HCT116 (cell line): ENCODE measurements at regions of chr5 and their contacts with region 1.

Region 1: DNA sequence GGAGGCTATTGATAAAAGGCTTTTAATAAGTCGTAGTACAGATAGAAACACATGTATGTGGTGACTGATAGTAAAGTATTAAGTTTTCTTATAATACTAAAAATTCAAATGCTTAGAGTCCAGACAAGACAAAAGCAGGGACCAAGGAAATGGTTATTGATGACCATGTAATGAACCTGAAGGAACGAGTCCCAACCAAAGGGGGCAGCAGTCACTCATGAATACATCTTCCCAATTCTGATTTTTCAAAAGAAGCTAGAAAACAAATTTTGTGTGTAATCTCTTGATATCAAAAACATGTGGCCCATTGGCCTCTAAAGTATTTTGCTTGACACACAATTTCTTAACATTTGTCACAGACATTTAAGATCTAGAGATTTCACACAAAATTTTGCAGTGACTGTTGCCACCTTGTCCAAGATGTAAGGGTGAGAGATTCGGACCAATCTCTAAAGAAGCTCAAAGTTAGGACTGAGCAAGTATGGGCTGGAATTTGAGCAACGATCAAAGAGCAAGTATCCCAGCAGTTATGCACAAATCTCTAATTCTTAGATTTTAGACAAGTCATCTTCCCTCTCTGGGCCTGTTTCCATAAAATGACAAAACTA is 66.8 kb downstream of the ARL15 start:
- DNase-seq: peak; percentile 27
- ATAC-seq: peak; percentile 72
- H3K4me3 ChIP-seq: no peak overlapping the region
- H3K27ac ChIP-seq: no peak overlapping the region
- H3K4me1 ChIP-seq: no peaks in the 10 kb centered on the region
- H3K27me3 ChIP-seq: no peaks in the 10 kb centered on the region
- CTCF ChIP-seq: peak; percentile 59 to 77 (median 60)
- POLR2A ChIP-seq: no peak
- RAD21 ChIP-seq: peak; percentile 77

Region 2: GRCh38 chr5:54492178-54492577 is 248.6 kb after region 1 on chr5:
- CTCF ChIA-PET with region 1: interaction called, 48 read pairs
- POLR2A ChIA-PET with region 1: no interaction called
- RAD21 ChIA-PET with region 1: interaction called in 1 of 2 experiments, 6 read pairs
- intact Hi-C with region 1: loop called (anchors 1 kb)
- DNase-seq: no peak
- ATAC-seq: no peak
- H3K4me3 ChIP-seq: no peak overlapping the region
- H3K27ac ChIP-seq: no peak overlapping the region
- H3K4me1 ChIP-seq: no peaks in the 10 kb centered on the region
- H3K27me3 ChIP-seq: no peaks in the 10 kb centered on the region
- CTCF ChIP-seq: no peak
- POLR2A ChIP-seq: no peak
- RAD21 ChIP-seq: no peak

Region 3: GRCh38 chr5:54844905-54845566 is 601.5 kb after region 1 on chr5:
- CTCF ChIA-PET with region 1: interaction called, 9 read pairs
- POLR2A ChIA-PET with region 1: no interaction called
- RAD21 ChIA-PET with region 1: no interaction called
- intact Hi-C with region 1: loop called (anchors 5 kb)
- DNase-seq: peak; percentile 31
- ATAC-seq: no peak
- H3K4me3 ChIP-seq: no peak overlapping the region
- H3K27ac ChIP-seq: no peak overlapping the region
- H3K4me1 ChIP-seq: no peaks in the 10 kb centered on the region
- H3K27me3 ChIP-seq: no peaks in the 10 kb centered on the region
- CTCF ChIP-seq: peak; percentile 23 to 66 (median 64); a peak in 3 of 6 replicates
- POLR2A ChIP-seq: no peak
- RAD21 ChIP-seq: peak; percentile 72

Region 4: DNA sequence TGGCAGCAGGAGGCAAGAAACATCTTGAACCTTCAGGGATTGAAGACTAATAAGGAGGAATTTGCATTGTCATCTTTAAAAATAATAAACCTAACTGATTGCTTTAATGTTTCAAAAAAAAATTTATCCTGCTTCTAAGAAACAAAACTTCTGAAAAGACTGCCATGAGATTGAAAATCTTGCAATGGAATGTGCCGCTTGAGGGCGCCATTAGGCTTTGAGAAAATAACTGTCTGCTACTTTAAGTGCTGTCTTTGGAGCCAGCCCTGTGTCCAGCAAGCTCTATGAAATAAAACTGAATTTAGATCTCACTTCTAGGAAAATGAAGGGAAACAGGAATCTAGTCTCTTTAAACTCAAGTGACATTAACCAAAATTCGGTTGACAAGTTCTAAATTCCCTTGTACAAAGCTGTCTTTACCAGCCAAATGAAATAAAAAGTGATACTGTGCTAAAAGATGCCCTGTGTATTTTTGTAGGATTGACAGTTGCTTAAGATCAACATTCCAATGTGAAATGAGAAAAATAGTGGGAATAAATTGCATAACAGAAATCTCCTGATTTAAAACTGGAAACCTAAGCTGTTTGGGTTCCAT is 662.5 kb after region 1 on chr5:
- CTCF ChIA-PET with region 1: interaction called, 11 read pairs
- POLR2A ChIA-PET with region 1: no interaction called
- RAD21 ChIA-PET with region 1: no interaction called
- intact Hi-C with region 1: no loop called
- DNase-seq: peak; percentile 44
- ATAC-seq: peak; percentile 62
- H3K4me3 ChIP-seq: no peak overlapping the region
- H3K27ac ChIP-seq: no peak overlapping the region
- H3K4me1 ChIP-seq: no peaks in the 10 kb centered on the region
- H3K27me3 ChIP-seq: peaks cover 69% of the 10 kb centered on the region
- CTCF ChIP-seq: peak; percentile 55 to 79 (median 75)
- POLR2A ChIP-seq: no peak
- RAD21 ChIP-seq: peak; percentile 77